ENCODE measurements at regions of chr20 and their contacts with region 1.

Region 1: DNA sequence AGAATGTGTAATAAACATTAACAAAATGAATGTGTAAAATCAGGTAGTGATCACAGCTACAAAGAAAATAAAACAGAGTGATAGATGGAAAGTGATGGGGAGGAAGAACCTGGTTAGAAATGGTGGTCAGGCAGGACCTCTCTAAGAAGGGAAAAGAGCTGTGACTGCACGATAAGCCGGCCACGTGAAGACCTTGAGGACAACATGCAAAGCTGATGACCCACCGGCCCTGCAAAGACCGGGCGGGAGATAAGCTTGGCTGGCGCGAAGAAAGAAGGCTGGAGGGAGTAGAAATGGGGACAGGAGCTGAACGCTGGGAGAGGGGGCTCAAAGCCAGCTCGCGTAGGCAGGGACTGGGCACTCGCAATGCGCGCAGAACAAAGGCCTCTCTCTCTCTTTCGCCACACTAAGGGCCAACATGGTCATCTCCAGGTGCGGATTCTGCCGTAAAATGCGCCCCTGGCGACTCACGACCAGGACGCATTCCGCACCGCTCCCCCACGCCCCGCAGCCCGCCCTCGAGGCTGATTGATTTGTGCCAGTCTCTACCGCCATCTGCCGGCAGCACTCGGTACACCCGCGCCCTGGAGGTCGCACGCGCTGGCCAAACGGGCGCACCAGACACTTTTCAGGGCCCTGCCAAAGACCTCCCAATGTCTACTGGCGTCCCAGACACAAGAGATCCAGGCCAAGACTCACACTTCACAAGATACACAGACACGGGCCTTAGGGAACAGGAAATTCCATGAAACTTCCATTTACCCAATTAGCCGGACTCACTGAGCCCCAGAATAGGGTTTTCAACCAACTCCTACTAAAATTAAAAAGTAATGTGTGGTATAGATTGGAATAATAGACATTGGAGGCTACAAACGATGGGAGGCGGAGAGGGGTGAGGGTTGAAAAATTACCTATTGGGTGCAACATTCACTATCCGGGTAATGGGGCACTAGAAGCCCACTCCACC is 9.4 kb downstream of the DEFB132 start:
- H3K4me3 ChIP-seq: peak overlapping the region; percentile 17; the same call in 1 of the 2 replicates
- H3K27ac ChIP-seq: no peak overlapping the region
- H3K4me1 ChIP-seq: no peaks in the 10 kb centered on the region
- CTCF ChIP-seq: peak; percentile 98

Region 2: GRCh38 chr20:189611-190010 is 77.3 kb before region 1 on chr20 and contains the start of gene DEFB128:
- CTCF ChIA-PET with region 1: no interaction called
- POLR2A ChIA-PET with region 1: no interaction called
- H3K4me3 ChIP-seq: no peak within 1 kb of the TSS
- H3K27ac ChIP-seq: no peak within 1 kb of the TSS
- H3K4me1 ChIP-seq: no peaks in the 10 kb centered on the region
- CTCF ChIP-seq: no peak

Region 3: GRCh38 chr20:219290-220115 is 47.4 kb before region 1 on chr20:
- CTCF ChIA-PET with region 1: interaction called, 20 read pairs
- POLR2A ChIA-PET with region 1: no interaction called
- H3K4me3 ChIP-seq: no peak overlapping the region
- H3K27ac ChIP-seq: no peak overlapping the region
- H3K4me1 ChIP-seq: no peaks in the 10 kb centered on the region
- CTCF ChIP-seq: peak; percentile 75

Region 4: GRCh38 chr20:226958-227357 is 39.9 kb before region 1 on chr20 and contains the start of gene DEFB129:
- CTCF ChIA-PET with region 1: interaction called, 20 read pairs
- POLR2A ChIA-PET with region 1: no interaction called
- H3K4me3 ChIP-seq: no peak within 1 kb of the TSS
- H3K27ac ChIP-seq: no peak within 1 kb of the TSS
- H3K4me1 ChIP-seq: no peaks in the 10 kb centered on the region
- CTCF ChIP-seq: no peak

Region 5: DNA sequence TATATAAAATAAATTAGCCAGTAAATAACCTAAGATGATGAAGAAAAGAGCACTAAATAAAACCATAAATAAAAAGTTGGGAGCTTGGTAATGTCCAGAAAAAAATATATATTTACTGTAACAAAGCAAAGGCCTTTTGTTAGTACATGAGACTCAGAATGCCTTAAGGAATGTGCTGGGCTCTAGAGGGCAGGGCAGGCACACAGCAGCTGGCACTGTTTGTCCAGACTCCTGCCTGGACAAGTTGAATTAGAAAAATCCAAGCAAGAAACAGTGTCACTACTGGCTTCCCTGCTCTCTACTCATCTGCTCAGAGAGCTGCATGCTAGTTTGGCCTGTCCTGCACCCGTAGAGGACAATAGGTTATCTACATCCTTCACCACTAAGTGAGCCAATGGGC is 31.0 kb before region 1 on chr20:
- CTCF ChIA-PET with region 1: interaction called, 10 read pairs
- POLR2A ChIA-PET with region 1: no interaction called
- H3K4me3 ChIP-seq: no peak overlapping the region
- H3K27ac ChIP-seq: no peak overlapping the region
- H3K4me1 ChIP-seq: no peaks in the 10 kb centered on the region
- CTCF ChIP-seq: peak; percentile 75

Region 6: DNA sequence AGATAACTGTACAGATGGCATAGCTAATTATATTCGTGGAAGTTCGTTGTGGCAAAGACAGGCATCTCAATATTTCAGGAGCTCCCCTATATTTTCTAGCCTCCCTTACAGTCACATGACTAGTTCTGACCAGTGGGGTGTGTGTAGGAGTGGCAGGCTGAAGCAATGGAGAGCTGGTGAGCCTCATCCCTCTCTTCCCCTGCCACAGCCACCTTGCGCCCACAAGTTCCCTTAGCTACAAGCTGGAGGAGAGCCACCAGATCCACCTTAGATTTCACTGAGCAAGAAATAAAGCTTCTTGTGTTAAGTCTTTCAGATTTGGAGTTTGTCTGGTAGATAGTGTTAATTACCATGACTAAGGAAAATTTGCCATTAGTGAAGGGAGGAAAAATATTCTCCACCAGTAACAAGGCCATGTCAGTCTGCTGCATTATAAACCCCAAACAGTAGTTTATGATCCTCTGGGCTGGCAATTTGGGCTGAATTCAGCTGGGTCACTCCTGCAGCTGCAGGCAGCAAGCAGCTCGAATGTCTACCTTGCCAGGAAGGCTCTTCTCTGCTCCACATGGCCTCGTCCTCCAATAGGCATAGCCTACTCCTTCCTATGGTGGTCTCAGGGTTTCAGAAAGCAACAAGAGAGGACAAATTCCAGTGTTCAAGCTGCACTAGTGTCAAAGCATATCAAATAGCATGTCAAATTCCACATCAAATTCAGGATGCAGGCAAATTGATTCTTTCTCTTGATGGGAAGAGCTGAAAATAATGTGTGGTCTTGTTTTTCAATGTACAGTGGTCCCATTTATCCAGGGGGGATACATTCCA is 133.8 kb after region 1 on chr20:
- CTCF ChIA-PET with region 1: no interaction called
- POLR2A ChIA-PET with region 1: no interaction called
- H3K4me3 ChIP-seq: no peak overlapping the region
- H3K27ac ChIP-seq: no peak overlapping the region
- H3K4me1 ChIP-seq: no peaks in the 10 kb centered on the region
- CTCF ChIP-seq: no peak

Region 7: DNA sequence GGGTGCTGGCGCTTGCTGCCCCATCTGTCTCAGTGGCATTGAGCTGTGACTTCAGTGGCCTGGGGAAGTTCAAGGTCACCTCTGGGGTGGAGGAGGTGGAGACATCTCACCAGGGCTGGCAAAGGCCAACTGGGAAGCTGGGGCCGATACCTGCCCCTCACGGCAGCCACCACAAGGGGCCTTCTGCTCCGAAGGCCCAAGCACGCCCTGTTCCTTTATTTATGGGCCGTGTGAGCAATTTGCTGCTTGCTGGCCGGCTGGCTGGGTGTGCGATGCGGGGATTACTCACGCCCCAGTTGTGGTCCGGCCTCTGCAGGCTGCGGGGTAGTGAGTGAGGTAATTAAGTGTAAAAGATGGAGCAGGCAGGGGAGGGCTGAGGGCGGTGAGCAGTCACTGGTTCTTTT is 421.9 kb after region 1 on chr20:
- CTCF ChIA-PET with region 1: no interaction called
- POLR2A ChIA-PET with region 1: no interaction called
- H3K4me3 ChIP-seq: no peak overlapping the region
- H3K27ac ChIP-seq: no peak overlapping the region
- H3K4me1 ChIP-seq: no peaks in the 10 kb centered on the region
- CTCF ChIP-seq: no peak

Measured in HEK293 (cell line).